ENCODE measurements at regions of chr10 and their contacts with region 1.

Region 1: GRCh38 chr10:93554760-93555432 is 11.6 kb upstream of the FFAR4 start:
- DNase-seq: peak; percentile 81
- ATAC-seq: peak; percentile 77 to 95

Region 2: DNA sequence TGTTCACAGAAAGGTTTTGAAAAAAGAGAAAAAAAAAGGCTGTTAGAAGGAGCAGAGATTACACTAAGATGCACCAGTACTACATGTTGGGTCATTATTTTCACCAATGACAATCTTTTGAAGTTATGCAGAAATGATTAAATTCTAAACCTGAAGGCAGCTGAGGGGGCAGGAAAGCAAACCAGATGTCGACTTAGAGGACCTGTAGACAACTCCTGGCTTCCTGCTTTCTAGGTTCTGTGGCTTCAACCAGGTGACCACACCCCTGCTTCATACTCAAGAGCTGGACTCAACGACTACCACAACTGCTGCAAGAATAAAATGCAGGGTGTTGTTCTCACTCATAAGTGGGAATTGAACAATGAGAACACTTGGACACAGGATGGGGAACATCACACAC is 102.8 kb before region 1 on chr10:
- intact Hi-C with region 1: no loop called
- DNase-seq: no peak
- ATAC-seq: no peak

Region 3: DNA sequence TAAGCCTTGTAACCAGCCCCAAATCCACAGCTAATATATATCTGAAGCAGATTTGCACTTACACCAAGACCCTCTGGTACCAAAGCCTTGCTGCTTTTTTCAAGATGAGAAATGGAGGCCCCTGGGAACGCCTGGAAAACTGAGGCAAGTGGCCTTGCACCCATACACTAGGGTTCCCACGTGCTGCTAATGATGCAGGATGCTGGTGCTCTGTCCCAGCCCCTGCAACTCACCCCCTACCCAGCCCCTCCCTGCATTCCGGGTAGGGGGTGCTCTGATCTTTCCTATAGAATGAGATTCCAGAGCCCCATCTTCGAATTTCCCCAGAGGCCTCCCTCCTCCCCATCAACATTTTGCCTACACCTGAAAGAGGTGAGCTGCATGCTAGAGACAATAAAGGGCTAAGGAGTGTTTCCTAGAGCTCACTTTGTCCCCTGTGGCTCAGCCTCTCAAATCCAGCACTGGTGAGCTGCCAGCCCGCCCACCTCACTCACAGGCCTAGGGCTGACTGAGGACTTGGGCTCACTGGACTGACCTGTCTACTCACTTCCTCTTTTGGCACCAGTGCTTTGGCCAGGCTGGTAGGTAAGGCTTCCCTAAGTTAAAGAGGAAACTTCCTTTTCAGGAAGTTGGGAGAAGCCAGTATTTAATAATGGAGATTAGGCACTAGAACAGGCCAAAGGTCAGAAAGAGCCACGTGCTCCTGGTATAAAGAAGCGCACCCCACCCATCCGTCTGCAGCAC is 36.3 kb after region 1 on chr10:
- intact Hi-C with region 1: no loop called
- DNase-seq: peak; percentile 34
- ATAC-seq: peak in 1 of 2 donors; percentile 26

Region 4: GRCh38 chr10:93680412-93681047 is 125.6 kb after region 1 on chr10:
- intact Hi-C with region 1: loop called (anchors 5 to 10 kb)
- DNase-seq: no peak
- ATAC-seq: peak; percentile 55 to 70

Region 5: DNA sequence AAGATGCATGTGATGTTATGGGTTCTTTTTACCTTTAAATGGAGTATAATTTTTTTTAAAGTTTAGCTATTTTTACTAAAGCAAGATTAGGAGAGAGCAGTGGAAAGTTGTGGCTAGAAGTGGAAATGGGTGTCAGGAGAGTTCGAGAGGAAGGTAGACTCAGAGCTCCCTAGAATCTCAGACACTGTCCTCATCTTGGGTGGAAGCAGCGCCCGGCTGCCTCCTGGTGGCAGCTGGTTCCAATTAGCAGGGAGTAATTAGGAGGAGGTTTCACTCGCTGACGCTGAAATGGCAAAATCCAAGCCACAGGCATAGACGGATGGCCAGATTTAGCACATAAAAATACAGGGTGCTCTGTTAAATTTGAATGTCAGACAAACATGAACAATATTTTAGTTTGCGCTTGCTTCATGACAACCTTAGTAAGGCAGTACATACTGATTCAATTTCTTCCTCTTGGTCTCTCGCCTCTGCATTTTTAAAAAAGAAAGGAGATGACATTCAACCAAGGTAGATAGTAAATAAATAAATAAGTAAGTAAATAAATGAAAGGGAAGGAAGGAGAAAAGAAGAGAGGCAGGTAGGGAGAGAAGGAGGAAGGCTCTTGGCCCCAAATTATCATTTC is 261.3 kb after region 1 on chr10:
- intact Hi-C with region 1: loop called in 1 of 2 experiments (anchors 10 kb)
- DNase-seq: peak; percentile 74
- ATAC-seq: peak; percentile 92